ENCODE measurements at regions of chr14 and their contacts with region 1.

Region 1: DNA sequence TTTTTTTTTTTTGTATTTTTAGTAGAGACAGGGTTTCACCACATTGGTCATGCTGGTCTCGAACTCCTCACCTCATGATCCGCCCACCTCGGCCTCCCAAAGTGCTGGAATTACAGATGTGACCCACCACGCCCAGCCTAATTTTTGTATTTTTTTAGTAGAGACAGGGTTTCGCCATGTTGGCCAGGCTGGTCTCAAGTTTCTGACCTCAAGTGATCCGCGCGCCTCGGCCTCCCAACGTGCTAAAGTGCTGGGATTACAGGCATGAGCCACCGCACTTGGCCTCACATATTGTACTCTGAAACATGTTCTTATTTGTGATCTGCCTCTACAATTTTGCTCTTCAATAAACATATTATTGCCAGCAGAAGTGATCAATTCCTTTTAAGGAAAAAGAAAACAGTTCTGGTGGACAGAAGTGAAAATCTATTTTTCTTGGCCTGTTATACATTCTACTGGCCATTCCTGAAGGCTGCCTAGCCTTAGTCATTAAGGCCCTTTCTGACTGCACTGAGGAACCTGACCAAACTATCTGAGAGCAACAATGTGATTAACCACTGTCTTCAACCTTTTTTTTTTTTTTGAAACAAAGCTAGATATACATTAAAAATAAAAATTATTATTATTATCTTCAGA is 36.1 kb downstream of the SNX6 start:
- DNase-seq: no peak
- H3K4me3 ChIP-seq: no peak overlapping the region
- H3K4me3 Mint-ChIP-seq: no peak overlapping the region
- H3K27ac ChIP-seq: no peak overlapping the region
- H3K27ac Mint-ChIP-seq: peak overlapping the region in 1 of 7 donors; percentile 40
- H3K4me1 ChIP-seq: no peaks in the 10 kb centered on the region
- H3K4me1 Mint-ChIP-seq: no peaks in the 10 kb centered on the region
- H3K27me3 ChIP-seq: no peaks in the 10 kb centered on the region
- H3K27me3 Mint-ChIP-seq: peaks cover 0 to 1% (median 0%) of the 10 kb centered on the region in 3 donors
- CTCF ChIP-seq: no peak

Region 2: DNA sequence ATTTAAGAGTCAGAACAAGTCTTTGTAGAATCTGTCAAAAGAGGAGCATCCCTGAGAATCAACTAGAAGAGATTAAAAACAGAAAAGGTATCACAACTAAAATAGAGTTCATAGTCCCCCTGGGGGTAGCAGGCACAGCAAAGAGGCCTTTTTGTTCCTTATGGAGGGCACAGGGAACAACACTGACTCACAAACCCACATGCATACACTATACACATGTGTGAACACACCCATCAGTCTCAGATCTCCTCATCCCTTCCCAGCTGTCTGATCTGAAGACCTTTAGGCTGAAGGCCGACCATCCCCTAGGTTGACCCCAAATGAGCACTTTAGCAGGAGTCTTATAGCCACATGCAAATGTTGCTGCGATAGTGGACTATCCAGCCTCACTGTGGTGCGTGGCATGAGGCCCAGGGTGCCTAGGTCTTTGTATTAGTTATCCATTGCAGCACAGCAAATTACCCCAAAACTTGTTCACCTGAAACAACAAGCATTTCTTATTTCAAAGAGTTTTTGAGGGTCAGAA is 406.3 kb before region 1 on chr14:
- intact Hi-C with region 1: no loop called
- DNase-seq: no peak
- H3K4me3 ChIP-seq: no peak overlapping the region
- H3K4me3 Mint-ChIP-seq: no peak overlapping the region
- H3K27ac ChIP-seq: no peak overlapping the region
- H3K27ac Mint-ChIP-seq: no peak overlapping the region
- H3K4me1 ChIP-seq: no peaks in the 10 kb centered on the region
- H3K4me1 Mint-ChIP-seq: no peaks in the 10 kb centered on the region
- H3K27me3 ChIP-seq: peaks cover 0 to 2% of the 10 kb centered on the region in 2 donors
- H3K27me3 Mint-ChIP-seq: peaks cover 0 to 22% (median 0%) of the 10 kb centered on the region in 3 donors
- CTCF ChIP-seq: no peak

Region 3: DNA sequence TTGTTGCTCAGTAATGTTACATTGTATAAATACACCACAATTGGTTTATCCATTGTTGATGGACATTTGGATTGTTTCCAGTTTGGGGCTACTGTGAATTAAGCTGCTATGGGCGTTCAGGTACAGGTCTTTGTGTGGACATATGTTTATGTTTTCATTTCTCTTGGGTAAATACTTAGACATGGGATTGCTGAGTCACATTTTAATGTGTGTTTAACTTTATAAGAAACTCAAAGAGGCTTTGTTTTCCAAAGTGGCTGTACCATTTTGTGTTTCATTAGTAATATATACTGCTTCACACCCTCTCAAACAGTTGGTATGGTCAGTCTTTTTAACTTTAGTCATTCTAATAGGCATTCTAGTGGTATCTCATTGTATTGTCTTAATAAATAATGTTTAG is 356.8 kb before region 1 on chr14:
- intact Hi-C with region 1: no loop called
- DNase-seq: no peak
- H3K4me3 ChIP-seq: no peak overlapping the region
- H3K4me3 Mint-ChIP-seq: no peak overlapping the region
- H3K27ac ChIP-seq: no peak overlapping the region
- H3K27ac Mint-ChIP-seq: no peak overlapping the region
- H3K4me1 ChIP-seq: no peaks in the 10 kb centered on the region
- H3K4me1 Mint-ChIP-seq: no peaks in the 10 kb centered on the region
- H3K27me3 ChIP-seq: peaks cover 0 to 6% of the 10 kb centered on the region in 2 donors
- H3K27me3 Mint-ChIP-seq: peaks cover 2 to 12% (median 9%) of the 10 kb centered on the region in 3 donors
- CTCF ChIP-seq: no peak

Region 4: DNA sequence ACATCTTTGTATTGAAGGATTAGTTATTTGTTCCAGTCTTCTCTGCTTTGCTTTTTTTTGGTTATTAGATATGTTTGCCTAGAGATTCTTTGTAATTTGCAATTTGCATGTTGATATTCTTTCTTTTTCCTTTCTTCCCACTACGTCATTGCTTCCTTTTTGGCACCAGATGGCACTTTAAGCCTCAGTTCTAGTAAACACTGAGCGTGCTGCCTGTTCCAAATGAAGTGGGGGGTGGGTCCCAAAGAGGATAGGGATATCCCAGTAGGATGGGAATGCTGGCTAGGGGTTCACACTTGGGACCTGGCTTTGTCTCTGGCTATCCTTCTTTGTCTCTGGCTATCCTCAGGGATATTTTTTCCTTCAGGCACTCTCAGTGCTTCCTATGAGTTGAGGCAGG is 71.4 kb before region 1 on chr14:
- intact Hi-C with region 1: loop called in 1 of 2 experiments (anchors 10 kb)
- DNase-seq: no peak
- H3K4me3 ChIP-seq: no peak overlapping the region
- H3K4me3 Mint-ChIP-seq: no peak overlapping the region
- H3K27ac ChIP-seq: no peak overlapping the region
- H3K27ac Mint-ChIP-seq: no peak overlapping the region
- H3K4me1 ChIP-seq: no peaks in the 10 kb centered on the region
- H3K4me1 Mint-ChIP-seq: no peaks in the 10 kb centered on the region
- H3K27me3 ChIP-seq: no peaks in the 10 kb centered on the region
- H3K27me3 Mint-ChIP-seq: no peaks in the 10 kb centered on the region
- CTCF ChIP-seq: no peak